GM13976 (cell line): ENCODE measurements at regions of chr4 and their contacts with region 1.

Region 1: GRCh38 chr4:15655229-15656037 is at the start of gene FBXL5:
- DNase-seq: peak; percentile 94
- CTCF ChIP-seq: no peak

Region 2: DNA sequence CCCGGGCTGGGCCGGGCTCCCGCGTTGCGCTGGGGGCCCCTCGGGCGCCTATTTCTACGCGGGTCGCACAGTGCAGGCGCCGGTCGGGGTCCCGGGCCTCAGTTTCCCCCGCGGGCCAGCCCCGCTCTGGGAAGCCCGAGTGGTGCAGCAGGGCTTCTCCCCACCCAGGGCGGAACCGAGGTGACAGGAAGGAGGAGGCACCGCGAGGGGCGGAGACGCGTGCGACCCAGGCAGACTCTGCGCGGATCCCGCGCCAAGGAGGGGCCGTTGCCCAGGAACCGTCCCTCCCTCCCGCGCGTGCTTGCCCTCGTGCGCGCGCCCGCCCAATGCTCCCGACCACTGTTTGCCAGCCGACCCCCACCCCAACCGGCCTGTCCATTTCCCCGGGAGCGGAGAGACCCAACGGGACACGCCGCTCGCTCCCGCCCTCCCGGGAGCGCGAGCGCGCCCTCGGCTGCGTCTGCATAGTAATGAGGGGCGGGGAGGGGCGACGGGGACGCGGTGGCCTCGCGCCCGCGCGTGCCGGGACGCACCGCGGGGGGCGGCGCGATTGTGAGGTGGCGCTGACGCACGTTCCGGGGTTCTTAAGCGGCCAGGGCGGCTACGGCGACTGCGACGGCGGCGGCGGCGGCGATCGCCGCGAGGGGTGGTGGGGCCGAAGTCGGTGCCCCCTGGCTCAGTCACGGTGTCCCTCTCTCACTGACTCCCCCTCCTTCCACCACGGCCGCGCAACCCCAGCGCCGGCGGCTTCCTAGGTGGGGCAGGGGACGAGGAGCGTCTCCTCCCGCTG is 653.4 kb before region 1 on chr4 and contains the start of gene CPEB2:
- in situ Hi-C with region 1: loop called (anchors 25 kb)
- DNase-seq: peak; percentile 91
- CTCF ChIP-seq: no peak

Region 3: GRCh38 chr4:15765910-15766697 is 110.7 kb after region 1 on chr4:
- in situ Hi-C with region 1: no loop called
- DNase-seq: no peak
- CTCF ChIP-seq: no peak

Region 4: GRCh38 chr4:16329125-16329796 is 673.8 kb after region 1 on chr4:
- in situ Hi-C with region 1: no loop called
- DNase-seq: no peak
- CTCF ChIP-seq: no peak